ENCODE measurements at regions of chr2 and their contacts with region 1.

Region 1: GRCh38 chr2:216034065-216034464 is 20.7 kb upstream of the MREG start:
- DNase-seq: peak; percentile 88
- H3K4me3 Mint-ChIP-seq: no peak overlapping the region
- H3K27ac Mint-ChIP-seq: no peak overlapping the region
- H3K4me1 Mint-ChIP-seq: peaks cover 39% of the 10 kb centered on the region
- H3K27me3 Mint-ChIP-seq: no peaks in the 10 kb centered on the region

Region 2: DNA sequence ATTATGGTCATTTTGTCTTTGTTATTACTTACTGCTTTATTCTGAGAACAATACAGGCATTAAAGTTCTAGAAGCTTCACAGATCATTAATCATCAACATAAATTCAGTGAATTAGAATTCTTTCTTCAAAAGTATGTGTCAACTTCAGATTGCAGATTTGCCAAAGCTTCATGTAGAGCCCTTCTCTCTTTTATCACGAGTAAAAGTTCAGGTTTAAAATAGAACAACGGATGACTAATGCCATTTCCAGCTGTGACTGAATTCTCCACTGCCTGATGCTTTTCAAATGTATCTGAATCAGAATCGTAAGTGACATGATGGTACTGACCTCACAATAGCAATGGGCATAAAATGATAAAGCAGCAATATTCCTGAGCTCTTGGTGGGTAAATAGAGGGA is 1011.6 kb before region 1 on chr2:
- CTCF ChIA-PET with region 1: no interaction called
- POLR2A ChIA-PET with region 1: no interaction called
- intact Hi-C with region 1: no loop called
- DNase-seq: no peak
- H3K4me3 Mint-ChIP-seq: no peak overlapping the region
- H3K27ac Mint-ChIP-seq: no peak overlapping the region
- H3K4me1 Mint-ChIP-seq: no peaks in the 10 kb centered on the region
- H3K27me3 Mint-ChIP-seq: peaks cover 2% of the 10 kb centered on the region

Region 3: GRCh38 chr2:215982080-215982875 is 51.8 kb before region 1 on chr2:
- CTCF ChIA-PET with region 1: no interaction called
- POLR2A ChIA-PET with region 1: no interaction called
- intact Hi-C with region 1: loop called (anchors 1 kb)
- DNase-seq: peak; percentile 69
- H3K4me3 Mint-ChIP-seq: no peak overlapping the region
- H3K27ac Mint-ChIP-seq: no peak overlapping the region
- H3K4me1 Mint-ChIP-seq: peaks cover 36% of the 10 kb centered on the region
- H3K27me3 Mint-ChIP-seq: no peaks in the 10 kb centered on the region

Region 4: GRCh38 chr2:216044883-216045486 is 10.9 kb after region 1 on chr2:
- CTCF ChIA-PET with region 1: interaction called, 23 read pairs
- POLR2A ChIA-PET with region 1: no interaction called
- intact Hi-C with region 1: no loop called
- DNase-seq: no peak
- H3K4me3 Mint-ChIP-seq: no peak overlapping the region
- H3K27ac Mint-ChIP-seq: no peak overlapping the region
- H3K4me1 Mint-ChIP-seq: peaks cover 9% of the 10 kb centered on the region
- H3K27me3 Mint-ChIP-seq: no peaks in the 10 kb centered on the region

Region 5: GRCh38 chr2:216108967-216109921 is 75.2 kb after region 1 on chr2 and contains the start of gene XRCC5:
- CTCF ChIA-PET with region 1: interaction called, 32 read pairs
- POLR2A ChIA-PET with region 1: no interaction called
- intact Hi-C with region 1: loop called (anchors 1 kb)
- DNase-seq: peak; percentile 99
- H3K4me3 Mint-ChIP-seq: peak within 1 kb of the TSS; percentile 100
- H3K27ac Mint-ChIP-seq: peak within 1 kb of the TSS; percentile 100
- H3K4me1 Mint-ChIP-seq: peaks cover 51% of the 10 kb centered on the region
- H3K27me3 Mint-ChIP-seq: peaks cover 2% of the 10 kb centered on the region
- total RNA-seq, gene XRCC5: 510 to 515 TPM

Region 6: GRCh38 chr2:216206041-216206703 is 172.1 kb after region 1 on chr2:
- CTCF ChIA-PET with region 1: no interaction called
- POLR2A ChIA-PET with region 1: no interaction called
- intact Hi-C with region 1: loop called (anchors 1 kb)
- DNase-seq: no peak
- H3K4me3 Mint-ChIP-seq: peak overlapping the region; percentile 9
- H3K27ac Mint-ChIP-seq: peak overlapping the region; percentile 92
- H3K4me1 Mint-ChIP-seq: peaks cover 63% of the 10 kb centered on the region
- H3K27me3 Mint-ChIP-seq: no peaks in the 10 kb centered on the region

Region 7: GRCh38 chr2:216666461-216667233 is 632.6 kb after region 1 on chr2:
- CTCF ChIA-PET with region 1: interaction called, 3 read pairs
- POLR2A ChIA-PET with region 1: no interaction called
- intact Hi-C with region 1: loop called (anchors 1 kb)
- DNase-seq: peak; percentile 79
- H3K4me3 Mint-ChIP-seq: no peak overlapping the region
- H3K27ac Mint-ChIP-seq: no peak overlapping the region
- H3K4me1 Mint-ChIP-seq: no peaks in the 10 kb centered on the region
- H3K27me3 Mint-ChIP-seq: peaks cover 3% of the 10 kb centered on the region

Measured in activated CD4-positive, alpha-beta memory T cell treated with anti-CD3 and anti-CD28 coated beads for 36 hours (primary cell).